PC-9 (cell line): ENCODE measurements at regions of chr2 and their contacts with region 1.

Region 1: GRCh38 chr2:240232961-240233893 is 92.8 kb upstream of the OTOS start:
- DNase-seq: peak; percentile 79 to 99
- H3K4me3 ChIP-seq: peak overlapping the region; percentile 53
- H3K27ac ChIP-seq: no peak overlapping the region
- H3K4me1 ChIP-seq: peaks cover 11% of the 10 kb centered on the region; the same call in 1 of the 2 replicates
- H3K27me3 ChIP-seq: no peaks in the 10 kb centered on the region
- CTCF ChIP-seq: peak; percentile 98

Region 2: GRCh38 chr2:240149943-240150784 is 83.1 kb before region 1 on chr2:
- CTCF ChIA-PET with region 1: no interaction called
- POLR2A ChIA-PET with region 1: interaction called, 12 read pairs
- intact Hi-C with region 1: loop called (anchors 2 kb)
- DNase-seq: peak in 1 of 2 experiments; percentile 72
- H3K4me3 ChIP-seq: no peak overlapping the region
- H3K27ac ChIP-seq: no peak overlapping the region
- H3K4me1 ChIP-seq: no peaks in the 10 kb centered on the region
- H3K27me3 ChIP-seq: peaks cover 48% of the 10 kb centered on the region
- CTCF ChIP-seq: peak; percentile 95

Region 3: GRCh38 chr2:240369801-240370585 is 136.8 kb after region 1 on chr2:
- CTCF ChIA-PET with region 1: interaction called, 19 read pairs
- POLR2A ChIA-PET with region 1: interaction called, 14 read pairs
- intact Hi-C with region 1: loop called (anchors 1 kb)
- DNase-seq: peak; percentile 96 to 100
- H3K4me3 ChIP-seq: peak overlapping the region; percentile 36; the same call in 1 of the 2 replicates
- H3K27ac ChIP-seq: peak overlapping the region; percentile 83
- H3K4me1 ChIP-seq: peaks cover 57% of the 10 kb centered on the region
- H3K27me3 ChIP-seq: no peaks in the 10 kb centered on the region
- CTCF ChIP-seq: no peak

Region 4: GRCh38 chr2:240434728-240435456 is 201.7 kb after region 1 on chr2:
- CTCF ChIA-PET with region 1: interaction called, 8 read pairs
- POLR2A ChIA-PET with region 1: interaction called, 17 read pairs
- intact Hi-C with region 1: loop called (anchors 1 kb)
- DNase-seq: peak; percentile 79 to 99
- H3K4me3 ChIP-seq: peak overlapping the region; percentile 62
- H3K27ac ChIP-seq: peak overlapping the region; percentile 87
- H3K4me1 ChIP-seq: peaks cover 45% of the 10 kb centered on the region
- H3K27me3 ChIP-seq: no peaks in the 10 kb centered on the region
- CTCF ChIP-seq: no peak

Region 5: GRCh38 chr2:240458463-240459391 is 225.5 kb after region 1 on chr2:
- CTCF ChIA-PET with region 1: interaction called, 10 read pairs
- POLR2A ChIA-PET with region 1: interaction called, 8 read pairs
- intact Hi-C with region 1: loop called (anchors 1 kb)
- DNase-seq: no peak
- H3K4me3 ChIP-seq: no peak overlapping the region; the same call in 1 of the 2 replicates
- H3K27ac ChIP-seq: peak overlapping the region; percentile 84
- H3K4me1 ChIP-seq: peaks cover 56% of the 10 kb centered on the region
- H3K27me3 ChIP-seq: no peaks in the 10 kb centered on the region
- CTCF ChIP-seq: no peak

Region 6: GRCh38 chr2:240566203-240567136 is 333.2 kb after region 1 on chr2:
- CTCF ChIA-PET with region 1: interaction called, 11 read pairs
- POLR2A ChIA-PET with region 1: no interaction called
- intact Hi-C with region 1: loop called (anchors 2 kb)
- DNase-seq: peak; percentile 84 to 99
- H3K4me3 ChIP-seq: peak overlapping the region; percentile 67
- H3K27ac ChIP-seq: peak overlapping the region; percentile 100
- H3K4me1 ChIP-seq: peaks cover 71% of the 10 kb centered on the region
- H3K27me3 ChIP-seq: no peaks in the 10 kb centered on the region
- CTCF ChIP-seq: peak; percentile 90